PC-9 (cell line): ENCODE measurements at regions of chr17 and their contacts with region 1.

Region 1: DNA sequence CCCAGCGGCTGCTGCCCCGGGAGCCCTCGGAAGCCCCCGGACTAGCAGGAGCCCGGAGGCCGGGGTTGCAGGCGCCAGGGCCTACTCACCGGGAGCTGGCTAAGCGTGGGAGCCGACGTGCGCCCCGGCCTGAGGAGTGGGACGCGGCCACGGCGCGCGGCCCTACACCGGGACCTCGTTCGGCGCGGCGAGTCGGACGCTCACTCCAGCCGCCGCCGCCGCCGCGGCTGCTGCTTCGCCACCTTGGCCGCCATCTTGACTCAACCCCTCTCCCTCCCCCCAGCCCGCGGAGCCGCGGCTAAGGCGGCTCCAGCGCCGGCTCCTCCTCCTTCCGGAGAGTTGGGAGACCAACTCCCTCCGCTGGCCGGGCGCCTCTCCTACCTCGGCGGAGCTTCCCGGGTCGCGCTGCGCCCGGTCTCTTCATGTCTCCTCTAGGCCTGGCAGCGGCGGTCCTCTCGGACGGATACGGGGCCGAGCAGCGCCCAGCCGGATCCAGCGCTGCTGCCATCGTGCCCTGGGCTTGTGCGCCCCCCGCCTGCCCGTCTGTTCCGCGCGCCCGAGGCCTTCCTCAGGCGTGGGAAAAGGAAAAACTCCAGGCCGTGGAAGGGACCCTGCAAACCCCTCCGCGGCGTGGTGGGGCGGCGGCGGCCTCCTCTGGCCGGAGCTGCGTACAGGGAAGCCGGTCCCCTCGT is at the start of gene NCOR1:
- DNase-seq: peak; percentile 73 to 93
- H3K4me3 ChIP-seq: peak within 1 kb of the TSS; percentile 92
- H3K27ac ChIP-seq: peak within 1 kb of the TSS; percentile 90
- H3K4me1 ChIP-seq: peaks cover 23% of the 10 kb centered on the region
- H3K27me3 ChIP-seq: no peaks in the 10 kb centered on the region
- CTCF ChIP-seq: no peak; the same call in 1 of the 2 replicates
- total RNA-seq, gene NCOR1: 139 and 171 TPM in 2 replicates

Region 2: DNA sequence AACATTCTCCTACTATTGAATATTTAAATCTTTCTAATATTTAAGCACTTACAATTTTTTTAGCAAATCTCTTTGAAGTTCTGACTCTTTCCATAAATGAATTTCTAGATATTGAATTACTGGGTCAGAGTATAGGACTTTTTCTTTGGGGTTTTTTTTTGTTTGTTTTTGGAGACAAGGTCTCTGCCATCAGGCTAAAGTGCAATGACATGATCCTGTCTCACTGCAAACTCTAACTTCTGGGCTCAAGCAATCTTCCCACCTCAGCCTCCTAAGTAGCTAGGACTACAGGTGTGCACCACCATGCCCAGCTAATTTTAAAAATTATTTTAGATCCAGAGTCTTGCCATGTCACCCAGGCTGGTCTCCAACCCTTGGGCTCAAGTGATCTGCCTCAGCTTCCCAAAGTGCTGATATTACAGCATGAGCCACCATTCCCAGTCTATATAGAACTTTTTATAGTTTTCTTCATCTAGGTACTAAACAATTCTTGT is 26.5 kb after region 1 on chr17:
- CTCF ChIA-PET with region 1: interaction called, 26 read pairs
- POLR2A ChIA-PET with region 1: no interaction called
- intact Hi-C with region 1: no loop called
- DNase-seq: no peak
- H3K4me3 ChIP-seq: no peak overlapping the region
- H3K27ac ChIP-seq: no peak overlapping the region
- H3K4me1 ChIP-seq: no peaks in the 10 kb centered on the region
- H3K27me3 ChIP-seq: no peaks in the 10 kb centered on the region
- CTCF ChIP-seq: no peak